ENCODE measurements at regions of chr20 and their contacts with region 1.

Region 1: DNA sequence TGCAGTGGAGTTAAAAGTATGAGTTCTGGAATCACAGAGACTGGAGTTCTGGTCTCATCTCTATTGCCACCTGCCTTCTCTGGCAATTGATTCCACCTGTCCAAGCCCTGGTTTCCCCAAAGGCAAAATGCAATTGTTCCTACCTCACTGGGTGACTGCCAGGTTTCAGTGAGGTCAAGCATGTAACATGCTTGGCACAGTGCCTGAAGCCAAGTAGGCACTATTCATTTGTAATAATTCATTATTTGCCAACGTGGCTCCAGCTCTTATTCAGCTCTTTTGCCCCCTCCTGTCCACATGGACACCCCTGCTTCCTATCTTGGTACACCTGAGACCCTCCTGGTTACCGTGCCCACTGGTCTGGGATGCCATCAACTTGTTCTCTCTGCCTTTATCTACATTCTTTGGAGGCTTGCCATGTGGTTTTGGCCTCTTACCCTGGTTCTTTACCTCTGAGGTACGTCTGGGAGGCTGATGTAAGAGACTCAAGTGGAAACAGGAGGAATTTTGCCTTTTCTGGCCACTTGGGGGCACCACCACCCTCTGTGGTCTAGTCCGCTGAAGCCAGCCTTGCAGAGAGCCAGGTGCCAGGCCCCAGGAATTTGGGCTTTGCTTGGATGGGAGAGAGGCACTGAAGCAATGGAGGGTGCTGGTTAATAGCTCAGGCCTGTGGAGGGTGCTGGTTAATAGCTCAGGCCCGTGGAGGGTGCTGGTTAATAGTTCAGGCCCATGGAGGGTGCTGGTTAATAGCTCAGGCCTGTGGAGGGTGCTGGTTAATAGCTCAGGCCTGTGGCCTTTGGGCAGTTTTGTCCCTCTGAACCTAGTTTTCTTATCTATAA is 1.7 kb downstream of the KCNK15 start:
- DNase-seq: peak; percentile 83
- H3K4me3 ChIP-seq: no peak overlapping the region
- H3K27ac ChIP-seq: no peak overlapping the region
- H3K4me1 ChIP-seq: peaks cover 5 to 20% (median 10%) of the 10 kb centered on the region in 4 donors
- H3K27me3 ChIP-seq: peaks cover 64% of the 10 kb centered on the region
- CTCF ChIP-seq: peak; percentile 62 to 75 (median 66)
- EP300 ChIP-seq: no peak
- POLR2A ChIP-seq: no peak

Region 2: DNA sequence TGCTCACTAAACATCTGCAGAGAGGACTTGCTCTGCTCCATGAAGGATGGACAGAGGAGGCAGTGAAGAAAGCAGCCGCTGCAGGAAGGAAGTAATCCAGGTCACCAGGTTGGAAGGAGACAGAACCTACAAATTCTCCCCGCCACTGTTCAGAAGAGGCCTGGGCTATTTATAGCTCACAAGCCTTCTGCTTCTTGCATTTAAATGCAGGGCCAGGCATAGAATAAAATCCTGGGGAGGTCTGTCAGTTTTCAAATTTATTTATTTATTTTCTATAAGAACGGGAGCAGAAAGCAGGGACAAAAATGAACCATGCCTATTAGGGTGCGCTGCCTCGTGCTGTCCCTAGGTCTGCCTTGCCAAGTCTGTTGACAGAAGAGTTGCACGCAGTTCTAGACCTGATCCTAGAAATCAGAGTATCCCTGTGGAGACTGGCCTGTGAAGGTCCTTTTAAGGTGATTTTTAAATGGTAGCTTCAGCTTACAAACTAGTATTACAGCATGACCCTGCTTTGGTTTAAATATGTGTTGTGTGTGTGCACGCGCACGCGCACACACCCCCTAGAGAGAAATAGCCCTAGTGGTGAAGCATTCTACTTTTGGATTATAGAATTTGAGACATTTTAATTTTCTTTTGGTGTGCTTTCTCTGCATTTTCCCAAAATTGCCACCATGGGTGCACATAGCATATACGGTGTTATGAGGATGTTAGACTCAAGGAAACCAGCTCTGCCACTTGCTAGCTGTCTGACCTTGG is 43.4 kb after region 1 on chr20:
- in situ Hi-C with region 1: no loop called
- intact Hi-C with region 1: no loop called
- DNase-seq: no peak
- H3K4me3 ChIP-seq: no peak overlapping the region
- H3K27ac ChIP-seq: no peak overlapping the region
- H3K4me1 ChIP-seq: no peaks in the 10 kb centered on the region
- H3K27me3 ChIP-seq: peaks cover 17% of the 10 kb centered on the region
- CTCF ChIP-seq: no peak
- EP300 ChIP-seq: no peak
- POLR2A ChIP-seq: no peak

Region 3: DNA sequence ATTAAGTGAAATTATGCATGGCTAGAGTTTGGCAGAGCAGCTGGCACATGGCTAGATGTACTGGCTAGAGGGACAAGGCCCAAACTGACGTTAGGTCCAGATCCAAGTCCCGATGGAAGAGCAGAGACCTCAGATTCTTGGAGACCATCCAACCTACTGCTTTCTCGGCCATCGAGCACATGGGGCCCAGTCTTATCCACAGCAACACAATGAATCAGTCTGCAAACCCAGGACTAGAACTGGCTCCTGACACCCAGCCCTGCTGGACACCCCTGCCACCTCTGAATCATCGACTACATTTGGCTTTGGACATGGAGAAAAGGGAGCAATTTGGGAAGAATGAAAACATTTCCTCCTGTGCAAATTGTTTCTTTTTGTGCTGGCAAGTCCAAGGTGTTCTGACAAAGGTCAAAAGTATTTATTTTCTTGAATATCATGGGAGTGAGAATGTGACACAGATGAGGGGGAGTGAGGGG is 114.2 kb after region 1 on chr20:
- in situ Hi-C with region 1: loop called in 2 of 4 experiments (anchors 10 kb)
- intact Hi-C with region 1: loop called (anchors 5 kb)
- DNase-seq: no peak
- H3K4me3 ChIP-seq: no peak overlapping the region
- H3K27ac ChIP-seq: no peak overlapping the region
- H3K4me1 ChIP-seq: peaks cover 0 to 25% (median 1%) of the 10 kb centered on the region in 4 donors
- H3K27me3 ChIP-seq: no peaks in the 10 kb centered on the region
- CTCF ChIP-seq: no peak
- EP300 ChIP-seq: no peak
- POLR2A ChIP-seq: no peak

Region 4: DNA sequence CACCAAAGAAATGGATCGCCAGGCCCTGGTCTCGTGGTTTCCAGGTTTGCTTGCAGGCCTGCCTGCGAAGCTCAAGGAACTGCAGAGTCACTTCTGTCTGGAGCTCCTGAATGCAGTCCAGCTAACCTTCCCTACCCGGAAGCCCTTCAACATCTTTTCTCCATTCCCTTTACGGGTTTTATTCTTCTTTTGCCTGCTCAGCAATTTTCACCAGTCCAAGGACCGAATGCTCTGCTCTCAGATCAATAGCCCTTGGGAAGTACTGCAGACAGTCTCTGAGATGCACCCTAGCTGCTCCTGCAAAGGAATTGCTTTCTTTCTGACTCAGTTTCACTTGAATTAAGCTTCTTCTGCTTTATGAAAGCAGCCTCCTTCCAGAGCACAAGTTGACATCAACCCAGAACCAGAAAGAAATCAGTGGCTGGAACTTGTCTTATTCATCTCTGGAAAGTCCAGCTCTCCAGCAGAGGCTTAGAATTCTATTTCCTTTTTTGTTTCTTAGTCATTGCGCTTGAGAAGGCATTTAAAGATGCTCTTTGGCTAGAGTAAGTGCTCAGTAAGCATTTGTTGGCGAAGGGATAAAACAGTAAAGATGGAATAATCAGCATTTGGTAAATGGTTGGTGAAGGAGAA is 119.4 kb after region 1 on chr20:
- in situ Hi-C with region 1: loop called in 3 of 4 experiments (anchors 10 kb)
- intact Hi-C with region 1: loop called (anchors 5 kb)
- DNase-seq: no peak
- H3K4me3 ChIP-seq: no peak overlapping the region
- H3K27ac ChIP-seq: no peak overlapping the region
- H3K4me1 ChIP-seq: peaks cover 0 to 14% (median 3%) of the 10 kb centered on the region in 4 donors
- H3K27me3 ChIP-seq: no peaks in the 10 kb centered on the region
- CTCF ChIP-seq: no peak
- EP300 ChIP-seq: no peak
- POLR2A ChIP-seq: no peak

Measured in transverse colon (tissue), 4 donors.